Activated B cell treated with CpG ODN at 0.5 μM for 24 hours (primary cell): ENCODE measurements at regions of chr11 and their contacts with region 1.

Region 1: GRCh38 chr11:67468835-67469811 is at the start of gene TMEM134:
- DNase-seq: peak; percentile 88
- ATAC-seq: peak; percentile 73
- H3K4me3 Mint-ChIP-seq: peak within 1 kb of the TSS; percentile 89
- H3K27ac Mint-ChIP-seq: peak within 1 kb of the TSS; percentile 91
- H3K4me1 Mint-ChIP-seq: peaks cover 49% of the 10 kb centered on the region
- H3K27me3 Mint-ChIP-seq: no peaks in the 10 kb centered on the region
- CTCF ChIP-seq: no peak
- total RNA-seq, gene TMEM134: 76.0 and 83.5 TPM in 2 replicates

Region 2: GRCh38 chr11:67311556-67312082 is 157.5 kb before region 1 on chr11:
- CTCF ChIA-PET with region 1: no interaction called
- POLR2A ChIA-PET with region 1: no interaction called
- intact Hi-C with region 1: no loop called
- DNase-seq: no peak
- ATAC-seq: no peak
- H3K4me3 Mint-ChIP-seq: no peak overlapping the region
- H3K27ac Mint-ChIP-seq: no peak overlapping the region
- H3K4me1 Mint-ChIP-seq: peaks cover 11% of the 10 kb centered on the region
- H3K27me3 Mint-ChIP-seq: no peaks in the 10 kb centered on the region
- CTCF ChIP-seq: no peak

Region 3: GRCh38 chr11:67409261-67409666 is 59.9 kb before region 1 on chr11:
- CTCF ChIA-PET with region 1: no interaction called
- POLR2A ChIA-PET with region 1: interaction called, 121 read pairs
- intact Hi-C with region 1: no loop called
- DNase-seq: peak; percentile 61
- ATAC-seq: peak; percentile 63
- H3K4me3 Mint-ChIP-seq: peak overlapping the region; percentile 80
- H3K27ac Mint-ChIP-seq: peak overlapping the region; percentile 95
- H3K4me1 Mint-ChIP-seq: peaks cover 93% of the 10 kb centered on the region
- H3K27me3 Mint-ChIP-seq: no peaks in the 10 kb centered on the region
- CTCF ChIP-seq: no peak

Region 4: GRCh38 chr11:67420646-67421420 is 48.3 kb before region 1 on chr11:
- CTCF ChIA-PET with region 1: interaction called, 3 read pairs
- POLR2A ChIA-PET with region 1: interaction called, 37 read pairs
- intact Hi-C with region 1: loop called (anchors 1 kb)
- DNase-seq: peak; percentile 98
- ATAC-seq: peak; percentile 85
- H3K4me3 Mint-ChIP-seq: peak overlapping the region; percentile 79
- H3K27ac Mint-ChIP-seq: peak overlapping the region; percentile 83
- H3K4me1 Mint-ChIP-seq: peaks cover 52% of the 10 kb centered on the region
- H3K27me3 Mint-ChIP-seq: no peaks in the 10 kb centered on the region
- CTCF ChIP-seq: no peak

Region 5: GRCh38 chr11:67428052-67428914 is 40.8 kb before region 1 on chr11 and contains the start of gene RPS6KB2:
- CTCF ChIA-PET with region 1: no interaction called
- POLR2A ChIA-PET with region 1: interaction called, 1,417 read pairs
- intact Hi-C with region 1: loop called (anchors 1 kb)
- DNase-seq: peak; percentile 99
- ATAC-seq: peak; percentile 81
- H3K4me3 Mint-ChIP-seq: peak within 1 kb of the TSS; percentile 98
- H3K27ac Mint-ChIP-seq: peak within 1 kb of the TSS; percentile 93
- H3K4me1 Mint-ChIP-seq: peaks cover 41% of the 10 kb centered on the region
- H3K27me3 Mint-ChIP-seq: no peaks in the 10 kb centered on the region
- CTCF ChIP-seq: no peak
- total RNA-seq, gene RPS6KB2: 66.9 and 74.5 TPM in 2 replicates

Region 6: DNA sequence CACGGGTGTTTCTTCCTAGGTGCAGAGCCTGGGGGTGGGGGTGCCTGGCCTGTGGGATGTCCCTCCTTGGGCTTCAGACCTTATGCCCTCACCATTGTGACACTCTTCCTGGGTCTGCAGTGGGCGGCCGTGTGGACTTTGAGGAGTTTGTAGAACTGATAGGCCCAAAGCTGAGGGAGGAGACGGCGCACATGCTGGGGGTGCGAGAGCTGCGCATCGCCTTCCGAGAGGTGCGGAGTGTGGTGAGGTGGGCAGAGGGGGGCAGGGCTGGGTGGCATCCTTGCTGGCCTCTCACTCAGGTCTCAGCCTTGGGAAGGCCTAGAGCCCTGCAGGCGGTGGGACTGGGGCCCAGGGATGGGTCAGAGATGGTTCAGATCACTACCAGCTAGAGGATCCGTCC is 11.7 kb before region 1 on chr11:
- CTCF ChIA-PET with region 1: no interaction called
- POLR2A ChIA-PET with region 1: interaction called, 32 read pairs
- intact Hi-C with region 1: no loop called
- DNase-seq: no peak
- ATAC-seq: no peak
- H3K4me3 Mint-ChIP-seq: peak overlapping the region; percentile 13
- H3K27ac Mint-ChIP-seq: peak overlapping the region; percentile 84
- H3K4me1 Mint-ChIP-seq: peaks cover 53% of the 10 kb centered on the region
- H3K27me3 Mint-ChIP-seq: no peaks in the 10 kb centered on the region
- CTCF ChIP-seq: no peak